Vagina (tissue), 2 donors: ENCODE measurements at regions of chr5 and their contacts with region 1.

Region 1: DNA sequence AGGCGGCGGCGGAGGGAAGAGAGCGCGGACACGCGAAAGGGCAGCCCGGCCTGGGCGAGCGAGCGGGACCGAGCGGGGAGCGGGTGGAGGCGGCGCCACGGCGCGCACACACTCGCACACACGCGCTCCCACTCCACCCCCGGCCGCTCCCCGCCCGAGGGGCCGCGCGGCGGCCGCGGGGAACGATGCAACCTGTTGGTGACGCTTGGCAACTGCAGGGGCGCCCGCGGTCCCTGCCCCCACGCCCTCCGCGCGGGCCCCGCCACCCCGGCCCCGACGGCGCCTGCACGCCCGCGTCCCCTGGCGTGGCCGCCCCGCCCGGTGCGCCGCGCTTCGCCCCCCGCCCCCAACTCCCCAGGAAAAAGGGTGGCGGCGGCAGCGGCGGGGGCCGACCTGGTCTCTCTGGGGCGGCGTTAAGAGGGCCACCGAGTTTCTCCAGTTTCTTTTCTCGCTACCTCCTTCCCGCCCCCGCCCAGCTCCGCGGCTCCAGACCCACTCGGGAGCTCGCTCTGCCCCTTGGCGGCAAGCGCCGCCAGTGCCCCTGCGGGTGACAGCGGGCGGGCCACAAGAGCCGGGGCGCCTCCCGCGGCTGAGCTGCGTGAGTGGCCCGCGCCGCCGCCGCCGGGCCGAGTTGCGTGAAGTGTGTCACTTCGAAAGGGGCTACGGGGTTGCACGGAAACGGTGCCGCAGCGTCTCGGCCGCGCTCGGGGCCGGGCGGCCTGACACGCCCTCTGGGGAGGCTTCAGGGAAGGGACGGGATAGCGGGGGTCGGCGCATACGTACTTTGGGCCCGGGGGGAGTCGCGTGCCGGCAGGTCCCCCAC is at the start of gene NR3C1:
- DNase-seq: peak in 1 of 2 donors; percentile 93
- H3K4me3 ChIP-seq: peak within 1 kb of the TSS; percentile 76 to 77
- H3K27ac ChIP-seq: peak within 1 kb of the TSS; percentile 98
- H3K4me1 ChIP-seq: peaks cover 33% of the 10 kb centered on the region
- H3K27me3 ChIP-seq: no peaks in the 10 kb centered on the region
- CTCF ChIP-seq: peak in 2 of 3 experiments; percentile 26 to 42
- POLR2A ChIP-seq: peak in 1 of 2 donors; percentile 43
- total RNA-seq, gene NR3C1: 46.7 TPM

Region 2: GRCh38 chr5:143016777-143017516 is 386.9 kb before region 1 on chr5:
- intact Hi-C with region 1: loop called (anchors 10 kb)
- DNase-seq: no peak
- H3K4me3 ChIP-seq: no peak overlapping the region
- H3K27ac ChIP-seq: no peak overlapping the region
- H3K4me1 ChIP-seq: no peaks in the 10 kb centered on the region
- H3K27me3 ChIP-seq: no peaks in the 10 kb centered on the region
- CTCF ChIP-seq: peak in 1 of 3 experiments; percentile 43
- POLR2A ChIP-seq: no peak

Region 3: DNA sequence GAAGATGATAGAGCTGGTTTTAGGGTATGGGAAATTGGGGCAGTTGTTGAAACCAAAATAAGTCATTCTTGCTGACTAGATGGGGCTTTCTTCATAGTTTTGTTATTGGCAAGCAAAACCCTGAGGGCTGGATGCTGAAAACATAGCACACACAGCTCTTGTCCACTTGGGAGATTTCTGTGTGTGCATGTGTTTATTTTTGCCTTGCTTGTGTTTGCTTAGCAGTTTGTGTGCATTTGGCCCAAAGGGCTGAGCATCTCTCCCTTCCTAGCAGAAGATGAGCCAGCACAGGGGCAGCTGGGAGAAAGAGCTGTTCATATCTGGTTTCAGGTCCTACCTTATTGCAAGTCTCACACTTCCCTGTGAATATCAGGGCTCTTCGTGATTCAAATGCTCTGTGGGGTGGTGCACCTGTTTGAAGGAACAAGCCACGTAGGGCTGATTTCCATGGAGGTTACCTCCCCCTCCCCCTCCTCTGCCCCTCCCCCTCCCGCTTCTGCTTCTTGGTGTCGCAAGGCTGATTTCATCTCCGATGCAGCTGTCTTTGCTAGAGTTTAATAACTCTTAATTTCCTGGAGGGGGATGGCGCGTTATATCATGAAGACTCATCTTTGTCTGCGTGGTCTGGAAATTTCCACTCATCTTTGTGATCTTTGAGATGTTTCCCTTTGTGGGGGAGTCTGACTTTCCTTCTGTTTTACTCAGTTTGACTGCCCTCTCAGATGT is 337.1 kb before region 1 on chr5:
- intact Hi-C with region 1: loop called (anchors 5 kb)
- DNase-seq: no peak
- H3K4me3 ChIP-seq: no peak overlapping the region
- H3K27ac ChIP-seq: peak overlapping the region; percentile 37
- H3K4me1 ChIP-seq: peaks cover 47% of the 10 kb centered on the region
- H3K27me3 ChIP-seq: no peaks in the 10 kb centered on the region
- CTCF ChIP-seq: no peak
- POLR2A ChIP-seq: no peak

Region 4: DNA sequence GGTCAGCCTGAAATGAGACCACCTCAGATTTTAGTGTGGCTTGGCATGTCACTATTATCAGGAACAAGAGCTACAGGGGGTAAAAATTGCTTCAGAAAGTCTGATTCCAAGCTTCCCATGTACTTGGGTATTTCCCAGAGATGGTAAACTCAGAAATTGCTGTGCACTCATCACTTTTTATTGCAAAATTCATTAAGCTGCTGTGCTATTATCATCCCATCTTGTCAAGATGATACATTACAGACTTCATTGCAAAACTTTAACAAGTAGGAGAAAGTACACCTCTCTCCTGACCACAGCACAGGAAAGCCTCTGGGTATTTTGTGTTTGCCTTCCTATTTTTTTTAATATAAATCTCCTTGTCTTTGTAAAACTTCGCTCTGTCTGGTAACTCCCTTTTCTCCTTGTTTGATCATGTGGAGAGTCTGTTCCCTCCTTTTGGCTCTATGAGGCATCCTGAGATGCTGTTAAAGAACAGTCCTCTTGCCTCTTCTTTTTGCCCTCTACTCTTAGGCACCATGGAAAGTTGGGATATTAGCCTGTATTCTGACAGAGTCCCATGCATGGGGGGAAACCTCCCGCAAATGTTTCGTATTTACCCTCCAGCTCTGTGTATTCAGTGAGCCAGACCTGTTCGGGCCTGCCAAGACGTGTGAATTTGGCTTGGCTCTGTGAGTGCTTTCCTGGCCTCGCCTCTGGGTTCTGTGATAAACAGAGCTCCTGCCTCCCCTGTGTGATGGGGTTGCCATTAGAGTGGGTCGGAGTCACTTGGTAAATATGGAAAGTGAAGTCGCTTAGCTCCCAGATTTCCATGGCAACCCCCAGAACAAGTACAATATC is 261.0 kb before region 1 on chr5:
- intact Hi-C with region 1: loop called (anchors 10 kb)
- DNase-seq: no peak
- H3K4me3 ChIP-seq: no peak overlapping the region
- H3K27ac ChIP-seq: peak overlapping the region; percentile 36
- H3K4me1 ChIP-seq: peaks cover 66% of the 10 kb centered on the region
- H3K27me3 ChIP-seq: no peaks in the 10 kb centered on the region
- CTCF ChIP-seq: no peak
- POLR2A ChIP-seq: no peak

Region 5: DNA sequence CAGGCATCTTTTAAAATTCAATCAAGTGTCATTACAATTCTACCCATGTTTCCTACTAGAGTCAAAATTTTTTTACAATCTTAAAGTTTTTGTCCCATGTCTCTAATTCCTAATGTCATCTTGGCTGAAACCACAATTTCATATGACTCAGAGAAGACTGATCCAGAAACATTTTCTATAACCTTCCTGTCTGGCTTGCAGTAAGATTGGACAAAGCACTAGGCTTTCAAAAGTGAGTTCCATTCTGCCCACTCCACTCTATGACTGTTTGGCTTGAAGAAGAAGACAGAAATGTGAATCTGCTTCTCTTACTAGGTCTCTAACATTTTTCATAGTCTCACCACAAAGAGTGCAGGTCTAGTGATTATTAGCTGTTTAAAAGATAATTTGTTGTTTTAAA is 89.1 kb before region 1 on chr5:
- intact Hi-C with region 1: loop called (anchors 10 kb)
- DNase-seq: no peak
- H3K4me3 ChIP-seq: no peak overlapping the region
- H3K27ac ChIP-seq: no peak overlapping the region
- H3K4me1 ChIP-seq: peaks cover 27% of the 10 kb centered on the region
- H3K27me3 ChIP-seq: no peaks in the 10 kb centered on the region
- CTCF ChIP-seq: no peak
- POLR2A ChIP-seq: no peak

Region 6: DNA sequence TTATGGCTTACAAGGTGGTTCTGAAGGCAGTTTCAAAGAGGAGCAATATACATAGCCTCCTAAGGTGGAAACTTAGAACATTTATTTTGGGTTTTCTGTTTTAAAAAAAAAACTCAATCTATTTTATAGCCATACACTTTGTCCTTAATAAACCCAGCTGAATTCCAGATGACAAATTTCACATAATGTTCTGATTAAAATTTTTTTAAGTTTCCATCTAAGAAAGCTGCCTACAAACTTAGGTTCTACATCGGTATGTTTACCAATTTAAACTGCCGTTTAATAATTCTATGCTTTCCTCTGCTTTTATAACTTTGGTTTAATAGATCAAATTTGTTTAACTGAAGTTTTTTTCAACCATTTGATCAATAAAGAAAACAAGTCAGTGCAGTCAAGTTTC is 12.9 kb before region 1 on chr5:
- intact Hi-C with region 1: no loop called
- DNase-seq: no peak
- H3K4me3 ChIP-seq: no peak overlapping the region
- H3K27ac ChIP-seq: no peak overlapping the region
- H3K4me1 ChIP-seq: peaks cover 67% of the 10 kb centered on the region
- H3K27me3 ChIP-seq: no peaks in the 10 kb centered on the region
- CTCF ChIP-seq: no peak
- POLR2A ChIP-seq: no peak

Region 7: GRCh38 chr5:143554187-143554717 is 150.4 kb after region 1 on chr5:
- intact Hi-C with region 1: no loop called
- DNase-seq: no peak
- H3K4me3 ChIP-seq: no peak overlapping the region
- H3K27ac ChIP-seq: no peak overlapping the region
- H3K4me1 ChIP-seq: peaks cover 6% of the 10 kb centered on the region
- H3K27me3 ChIP-seq: no peaks in the 10 kb centered on the region
- CTCF ChIP-seq: no peak
- POLR2A ChIP-seq: no peak